WTC11 (cell line): ENCODE measurements at regions of chr4 and their contacts with region 1.

Region 1: GRCh38 chr4:85423431-85423830 is 51.5 kb upstream of the ARHGAP24 start:
- DNase-seq: no peak
- ATAC-seq: no peak
- H3K4me3 Mint-ChIP-seq: no peak overlapping the region
- H3K27ac Mint-ChIP-seq: no peak overlapping the region
- H3K4me1 Mint-ChIP-seq: peaks cover 13% of the 10 kb centered on the region
- H3K27me3 Mint-ChIP-seq: no peaks in the 10 kb centered on the region; the same call in 1 of the 2 replicates
- CTCF ChIP-seq: no peak

Region 2: GRCh38 chr4:85474818-85475630 is 51.6 kb after region 1 on chr4 and contains the start of gene ARHGAP24:
- CTCF ChIA-PET with region 1: interaction called, 14 read pairs
- POLR2A ChIA-PET with region 1: interaction called, 3 read pairs
- DNase-seq: peak; percentile 87
- ATAC-seq: peak; percentile 95
- H3K4me3 Mint-ChIP-seq: peak within 1 kb of the TSS; percentile 85
- H3K27ac Mint-ChIP-seq: peak within 1 kb of the TSS; percentile 95
- H3K4me1 Mint-ChIP-seq: peaks cover 8% of the 10 kb centered on the region
- H3K27me3 Mint-ChIP-seq: peaks cover 7% of the 10 kb centered on the region
- CTCF ChIP-seq: no peak
- total RNA-seq, gene ARHGAP24: 1.2 to 2.1 TPM (median 1.4 TPM) in 3 replicates

Region 3: GRCh38 chr4:85531560-85532341 is 108.3 kb after region 1 on chr4:
- CTCF ChIA-PET with region 1: no interaction called
- POLR2A ChIA-PET with region 1: no interaction called
- DNase-seq: no peak
- ATAC-seq: no peak
- H3K4me3 Mint-ChIP-seq: no peak overlapping the region
- H3K27ac Mint-ChIP-seq: no peak overlapping the region
- H3K4me1 Mint-ChIP-seq: 0 out of 2 replicates have a peak, but pooled peaks cover 3% of the 10 kb centered on the region
- H3K27me3 Mint-ChIP-seq: no peaks in the 10 kb centered on the region
- CTCF ChIP-seq: no peak

Region 4: GRCh38 chr4:85725721-85726170 is 302.3 kb after region 1 on chr4:
- CTCF ChIA-PET with region 1: no interaction called
- POLR2A ChIA-PET with region 1: no interaction called
- DNase-seq: no peak
- ATAC-seq: no peak
- H3K4me3 Mint-ChIP-seq: no peak overlapping the region
- H3K27ac Mint-ChIP-seq: no peak overlapping the region
- H3K4me1 Mint-ChIP-seq: no peaks in the 10 kb centered on the region
- H3K27me3 Mint-ChIP-seq: no peaks in the 10 kb centered on the region
- CTCF ChIP-seq: no peak

Region 5: GRCh38 chr4:85747882-85748491 is 324.6 kb after region 1 on chr4:
- CTCF ChIA-PET with region 1: interaction called, 20 read pairs
- POLR2A ChIA-PET with region 1: no interaction called
- DNase-seq: peak; percentile 19
- ATAC-seq: peak; percentile 80
- H3K4me3 Mint-ChIP-seq: no peak overlapping the region
- H3K27ac Mint-ChIP-seq: no peak overlapping the region
- H3K4me1 Mint-ChIP-seq: peaks cover 14% of the 10 kb centered on the region
- H3K27me3 Mint-ChIP-seq: no peaks in the 10 kb centered on the region
- CTCF ChIP-seq: peak; percentile 56